HAP-1 (cell line): ENCODE measurements at regions of chr1 and their contacts with region 1.

Region 1: GRCh38 chr1:9269078-9269501 is 23.6 kb upstream of the SPSB1 start:
- DNase-seq: no peak
- H3K4me3 ChIP-seq: no peak overlapping the region
- H3K4me1 ChIP-seq: peaks cover 4% of the 10 kb centered on the region; the same call in 1 of the 2 replicates
- H3K27me3 ChIP-seq: no peaks in the 10 kb centered on the region

Region 2: DNA sequence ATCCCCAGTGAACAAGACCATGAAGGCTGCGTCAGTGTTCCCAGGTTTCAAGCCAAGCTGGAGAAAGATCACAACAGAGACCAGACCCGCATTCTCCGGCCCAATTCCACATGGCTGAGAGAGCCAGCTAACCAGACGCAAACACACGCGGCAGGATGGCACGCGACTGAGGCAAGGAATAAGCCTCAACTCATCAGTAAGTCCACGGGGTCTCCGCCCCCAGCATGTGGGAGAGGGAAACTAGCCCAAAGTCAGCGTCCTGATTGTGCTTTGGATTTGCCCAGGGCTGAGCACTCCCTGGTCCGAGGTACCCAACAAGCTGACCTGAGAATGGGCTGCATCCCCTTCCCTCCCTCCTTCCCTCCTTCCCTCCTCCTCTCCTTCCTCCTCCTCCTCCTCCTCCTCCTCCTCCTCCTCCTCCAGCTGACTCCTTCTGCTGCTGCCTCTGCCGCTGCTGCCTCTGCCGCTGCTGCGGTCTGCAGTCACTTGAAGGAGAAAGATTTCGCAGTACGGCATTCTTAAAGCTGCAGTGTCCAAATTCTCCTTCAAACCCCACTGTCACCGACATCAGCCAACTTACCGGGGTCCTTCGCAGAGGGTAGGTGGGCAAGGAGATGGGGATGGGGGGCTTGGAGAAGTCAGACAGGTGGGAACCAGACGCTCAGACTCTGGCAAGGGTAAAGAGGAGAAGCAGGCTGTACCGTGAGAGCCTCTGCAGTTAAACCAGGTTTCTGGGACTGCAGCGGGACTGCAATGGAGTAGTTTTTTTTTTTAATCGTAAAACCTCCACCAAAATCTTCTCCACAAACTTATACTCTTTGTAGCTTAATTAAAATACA is 67.5 kb before region 1 on chr1:
- in situ Hi-C with region 1: no loop called
- DNase-seq: peak; percentile 26 to 37
- H3K4me3 ChIP-seq: peak overlapping the region; percentile 17
- H3K4me1 ChIP-seq: peaks cover 3% of the 10 kb centered on the region
- H3K27me3 ChIP-seq: peaks cover 33% of the 10 kb centered on the region

Region 3: GRCh38 chr1:9352377-9353134 is 83.5 kb after region 1 on chr1:
- in situ Hi-C with region 1: no loop called
- DNase-seq: no peak
- H3K4me3 ChIP-seq: no peak overlapping the region
- H3K4me1 ChIP-seq: peaks cover 1% of the 10 kb centered on the region
- H3K27me3 ChIP-seq: no peaks in the 10 kb centered on the region

Region 4: DNA sequence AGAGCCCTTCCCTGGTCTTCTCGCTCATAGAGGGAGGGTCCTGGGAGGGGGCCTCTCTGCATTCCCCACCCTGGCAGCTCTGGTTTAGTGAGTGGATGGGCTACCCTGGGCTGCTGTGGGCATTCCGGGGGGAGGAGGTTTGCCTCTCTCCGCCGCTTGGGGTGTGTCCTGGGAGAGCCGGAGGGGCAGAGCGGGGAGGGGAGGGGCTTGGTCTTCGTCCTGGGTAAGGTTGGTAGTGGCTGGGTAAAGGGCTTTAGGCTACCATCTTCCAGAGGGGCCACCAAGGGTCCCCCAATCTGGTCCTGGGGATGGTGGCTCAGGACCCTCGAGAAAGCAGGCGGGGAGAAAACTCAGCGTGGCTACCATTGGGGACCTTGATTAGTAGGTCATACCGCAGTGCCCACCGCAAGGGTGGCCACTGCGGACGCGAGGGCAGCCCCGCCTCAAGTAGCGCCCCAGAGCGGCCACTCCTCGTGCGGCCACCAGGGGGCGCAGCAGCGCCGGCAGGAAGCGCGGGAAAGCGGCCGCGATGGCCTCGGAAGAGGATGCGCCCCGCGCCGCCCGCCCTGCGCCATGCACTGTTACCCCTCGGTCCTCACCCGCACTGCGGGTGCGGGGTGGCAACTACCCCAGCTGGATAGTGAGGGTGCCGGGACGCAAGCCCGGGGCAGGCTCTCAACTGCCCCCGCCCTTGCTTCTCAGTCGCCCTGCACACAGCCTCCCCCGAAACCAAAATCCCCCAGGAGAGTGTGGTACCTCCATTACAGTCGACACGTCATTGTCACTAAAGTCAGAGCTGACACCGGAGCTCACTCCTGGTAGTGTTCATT is 226.1 kb after region 1 on chr1:
- in situ Hi-C with region 1: loop called (anchors 5 kb)
- DNase-seq: peak; percentile 55 to 80
- H3K4me3 ChIP-seq: peak overlapping the region; percentile 18
- H3K4me1 ChIP-seq: peaks cover 8% of the 10 kb centered on the region
- H3K27me3 ChIP-seq: no peaks in the 10 kb centered on the region

Region 5: GRCh38 chr1:9588551-9589143 is 319.6 kb after region 1 on chr1 and contains the start of gene TMEM201:
- in situ Hi-C with region 1: loop called (anchors 10 kb)
- DNase-seq: peak; percentile 80 to 95
- H3K4me3 ChIP-seq: peak within 1 kb of the TSS; percentile 65
- H3K4me1 ChIP-seq: peaks cover 15% of the 10 kb centered on the region
- H3K27me3 ChIP-seq: no peaks in the 10 kb centered on the region